ENCODE measurements at regions of chr3 and their contacts with region 1.

Region 1: GRCh38 chr3:148366743-148367410 is 330.8 kb upstream of the AGTR1 start:
- DNase-seq: no peak
- ATAC-seq: peak; percentile 66
- H3K4me3 ChIP-seq: no peak overlapping the region
- H3K27ac ChIP-seq: no peak overlapping the region
- H3K4me1 ChIP-seq: no peaks in the 10 kb centered on the region
- H3K27me3 ChIP-seq: no peaks in the 10 kb centered on the region
- CTCF ChIP-seq: peak; percentile 14 to 42 (median 19); a peak in 3 of 6 replicates
- EP300 ChIP-seq: no peak
- POLR2A ChIP-seq: no peak
- RAD21 ChIP-seq: peak; percentile 64

Region 2: DNA sequence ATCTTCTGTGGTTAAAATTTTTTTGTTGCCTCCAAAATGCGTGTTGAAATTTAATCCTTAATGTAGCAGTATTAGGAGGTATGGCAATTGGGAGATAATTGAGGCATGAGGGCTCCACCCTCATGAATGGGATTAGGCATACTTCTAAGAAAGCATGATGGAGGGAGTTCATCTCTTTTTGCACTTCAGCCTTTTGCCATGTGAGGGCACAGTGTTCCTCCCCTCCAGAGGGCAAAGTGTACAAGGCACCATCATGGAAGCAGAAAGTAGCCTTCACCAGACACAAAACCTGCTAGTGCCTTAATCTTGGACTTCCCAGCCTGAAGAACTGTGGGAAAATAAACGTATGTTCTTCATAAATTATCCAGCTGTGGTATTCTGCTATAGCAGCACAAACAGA is 528.2 kb before region 1 on chr3:
- CTCF ChIA-PET with region 1: no interaction called
- POLR2A ChIA-PET with region 1: no interaction called
- RAD21 ChIA-PET with region 1: no interaction called
- SMC1A ChIA-PET with region 1: no interaction called
- in situ Hi-C with region 1: no loop called
- intact Hi-C with region 1: loop called (anchors 1 kb)
- DNase-seq: no peak
- ATAC-seq: peak; percentile 59; the same call in 2 of the 3 replicates
- H3K4me3 ChIP-seq: no peak overlapping the region
- H3K27ac ChIP-seq: no peak overlapping the region
- H3K4me1 ChIP-seq: no peaks in the 10 kb centered on the region
- H3K27me3 ChIP-seq: no peaks in the 10 kb centered on the region
- CTCF ChIP-seq: peak; percentile 8 to 35 (median 18); a peak in 3 of 6 replicates
- EP300 ChIP-seq: no peak
- POLR2A ChIP-seq: no peak
- RAD21 ChIP-seq: no peak

Region 3: GRCh38 chr3:147945968-147946519 is 420.8 kb before region 1 on chr3:
- CTCF ChIA-PET with region 1: interaction called, 3 read pairs
- POLR2A ChIA-PET with region 1: no interaction called
- RAD21 ChIA-PET with region 1: no interaction called
- SMC1A ChIA-PET with region 1: no interaction called
- in situ Hi-C with region 1: no loop called
- intact Hi-C with region 1: loop called (anchors 10 kb)
- DNase-seq: peak; percentile 17
- ATAC-seq: peak; percentile 85
- H3K4me3 ChIP-seq: peak overlapping the region; percentile 37; the same call in 1 of the 2 replicates
- H3K27ac ChIP-seq: no peak overlapping the region
- H3K4me1 ChIP-seq: no peaks in the 10 kb centered on the region
- H3K27me3 ChIP-seq: no peaks in the 10 kb centered on the region
- CTCF ChIP-seq: peak; percentile 21 to 41 (median 32); a peak in 5 of 6 replicates
- EP300 ChIP-seq: no peak
- POLR2A ChIP-seq: no peak
- RAD21 ChIP-seq: 0 out of 2 replicates have a peak, but pooled peaks have one; percentile 23

Region 4: DNA sequence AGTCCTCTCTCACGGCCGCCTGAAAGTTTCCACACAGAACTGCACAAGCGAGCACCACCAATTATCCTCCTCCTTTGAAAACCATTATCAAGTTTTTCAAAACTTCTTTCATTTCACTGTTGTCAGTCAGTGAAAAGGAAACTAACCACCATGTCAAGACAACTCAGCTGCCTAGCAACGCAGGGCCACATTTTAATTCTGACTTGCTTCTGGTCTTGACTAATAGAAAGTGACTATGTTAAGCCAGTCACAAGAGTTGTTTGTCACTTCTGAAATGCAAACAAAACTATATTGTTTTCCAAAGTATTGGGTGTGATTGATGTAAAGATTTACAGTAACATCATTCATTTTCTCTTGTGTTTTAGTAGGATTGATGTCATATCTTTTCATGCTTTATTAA is 281.9 kb before region 1 on chr3:
- CTCF ChIA-PET with region 1: interaction called, 15 read pairs
- POLR2A ChIA-PET with region 1: no interaction called
- RAD21 ChIA-PET with region 1: no interaction called
- SMC1A ChIA-PET with region 1: interaction called, 3 read pairs
- in situ Hi-C with region 1: no loop called
- intact Hi-C with region 1: no loop called
- DNase-seq: peak; percentile 45
- ATAC-seq: peak; percentile 98
- H3K4me3 ChIP-seq: no peak overlapping the region
- H3K27ac ChIP-seq: no peak overlapping the region
- H3K4me1 ChIP-seq: no peaks in the 10 kb centered on the region
- H3K27me3 ChIP-seq: no peaks in the 10 kb centered on the region
- CTCF ChIP-seq: no peak
- EP300 ChIP-seq: no peak
- POLR2A ChIP-seq: no peak
- RAD21 ChIP-seq: no peak

Region 5: GRCh38 chr3:148309390-148310035 is 57.4 kb before region 1 on chr3:
- CTCF ChIA-PET with region 1: interaction called, 5 read pairs
- POLR2A ChIA-PET with region 1: no interaction called
- RAD21 ChIA-PET with region 1: no interaction called
- SMC1A ChIA-PET with region 1: no interaction called
- in situ Hi-C with region 1: no loop called
- intact Hi-C with region 1: loop called (anchors 1 kb)
- DNase-seq: no peak
- ATAC-seq: peak; percentile 63
- H3K4me3 ChIP-seq: no peak overlapping the region
- H3K27ac ChIP-seq: no peak overlapping the region
- H3K4me1 ChIP-seq: no peaks in the 10 kb centered on the region
- H3K27me3 ChIP-seq: no peaks in the 10 kb centered on the region
- CTCF ChIP-seq: peak; percentile 54 to 61 (median 54); a peak in 5 of 6 replicates
- EP300 ChIP-seq: no peak
- POLR2A ChIP-seq: no peak
- RAD21 ChIP-seq: peak; percentile 85

Measured in GM12878 (cell line).